Right cardiac atrium (tissue), 5 donors: ENCODE measurements at regions of chr20 and their contacts with region 1.

Region 1: DNA sequence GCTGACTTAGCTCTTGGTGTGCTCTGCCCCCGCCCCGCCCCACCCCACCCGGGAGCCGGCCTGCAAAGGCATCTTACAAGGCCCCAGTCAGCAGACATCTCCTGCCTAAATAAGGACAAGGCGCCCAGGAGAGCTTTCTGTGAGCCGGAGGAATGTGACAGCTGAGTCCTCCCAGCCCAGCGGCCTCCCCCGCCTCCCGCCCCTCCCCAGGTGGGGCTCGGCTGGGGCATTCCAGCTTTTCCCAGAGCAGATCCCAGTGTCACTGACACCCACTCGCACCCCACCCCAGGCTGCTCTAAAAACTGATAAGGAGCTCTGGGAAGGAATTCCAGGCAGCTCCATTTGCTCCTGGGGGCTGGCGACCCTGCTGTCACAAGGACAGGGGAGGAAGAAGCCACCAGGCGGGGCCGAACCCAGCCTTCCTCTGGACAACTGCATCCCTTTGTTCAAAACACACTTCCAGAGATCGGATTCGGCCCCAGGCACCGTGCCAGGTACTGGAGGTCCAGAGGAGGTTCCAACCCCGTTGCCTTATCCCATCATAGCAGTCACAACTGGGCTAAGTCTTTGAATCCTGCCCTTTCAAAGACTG is 49.7 kb downstream of the JPH2 start:
- DNase-seq: peak; percentile 50 to 84 (median 84)
- ATAC-seq: peak; percentile 79 to 82
- H3K4me3 ChIP-seq: no peak overlapping the region
- H3K27ac ChIP-seq: peak overlapping the region; percentile 93
- H3K4me1 ChIP-seq: peaks cover 7% of the 10 kb centered on the region
- H3K27me3 ChIP-seq: no peaks in the 10 kb centered on the region

Region 2: GRCh38 chr20:44180814-44181213 is 43.5 kb after region 1 on chr20:
- intact Hi-C with region 1: loop called in 1 of 4 experiments (anchors 5 kb)
- DNase-seq: peak; percentile 39 to 77 (median 76)
- ATAC-seq: peak; percentile 85 to 88
- H3K4me3 ChIP-seq: peak overlapping the region; percentile 21
- H3K27ac ChIP-seq: peak overlapping the region; percentile 85
- H3K4me1 ChIP-seq: peaks cover 5% of the 10 kb centered on the region
- H3K27me3 ChIP-seq: no peaks in the 10 kb centered on the region

Region 3: DNA sequence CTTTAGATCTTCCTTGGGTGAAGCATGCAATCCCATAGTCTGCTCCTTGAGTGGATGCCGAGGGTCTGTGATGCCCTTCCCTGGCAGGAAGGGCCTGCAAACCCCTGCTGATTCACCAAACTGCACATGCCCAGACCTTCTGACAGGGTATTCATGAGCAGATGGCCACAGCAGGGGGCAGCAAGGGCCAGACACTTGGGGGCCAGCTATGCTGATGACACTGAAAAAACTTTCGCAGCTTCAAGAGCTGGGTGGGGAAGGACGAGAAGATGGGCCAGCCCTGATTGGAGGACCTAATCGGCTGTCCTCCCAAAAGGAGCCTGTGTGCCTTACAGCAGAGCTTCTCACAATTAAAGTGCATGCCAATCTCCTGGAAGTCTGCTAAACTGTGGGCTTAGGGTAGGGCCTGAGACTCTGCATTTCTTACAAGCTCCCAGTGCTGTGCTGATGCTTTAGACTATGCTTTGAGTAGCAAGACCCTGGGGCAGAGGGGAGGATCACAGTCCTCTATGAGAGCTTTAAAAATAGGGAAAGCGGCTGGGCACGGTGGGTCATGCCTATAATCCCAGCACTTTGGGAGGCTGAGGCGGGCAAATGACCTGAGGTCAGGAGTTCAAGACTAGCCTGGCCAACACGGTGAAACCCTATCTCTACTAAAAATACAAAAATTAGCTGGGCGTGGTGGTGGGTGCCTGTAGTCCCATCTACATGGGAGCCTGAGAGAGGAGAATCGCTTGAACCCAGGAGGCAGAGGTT is 94.6 kb after region 1 on chr20:
- intact Hi-C with region 1: no loop called
- DNase-seq: no peak
- ATAC-seq: peak in 1 of 2 donors; percentile 21
- H3K4me3 ChIP-seq: no peak overlapping the region
- H3K27ac ChIP-seq: no peak overlapping the region
- H3K4me1 ChIP-seq: peaks cover 2% of the 10 kb centered on the region
- H3K27me3 ChIP-seq: no peaks in the 10 kb centered on the region